ENCODE measurements at regions of chr21 and their contacts with region 1.

Region 1: DNA sequence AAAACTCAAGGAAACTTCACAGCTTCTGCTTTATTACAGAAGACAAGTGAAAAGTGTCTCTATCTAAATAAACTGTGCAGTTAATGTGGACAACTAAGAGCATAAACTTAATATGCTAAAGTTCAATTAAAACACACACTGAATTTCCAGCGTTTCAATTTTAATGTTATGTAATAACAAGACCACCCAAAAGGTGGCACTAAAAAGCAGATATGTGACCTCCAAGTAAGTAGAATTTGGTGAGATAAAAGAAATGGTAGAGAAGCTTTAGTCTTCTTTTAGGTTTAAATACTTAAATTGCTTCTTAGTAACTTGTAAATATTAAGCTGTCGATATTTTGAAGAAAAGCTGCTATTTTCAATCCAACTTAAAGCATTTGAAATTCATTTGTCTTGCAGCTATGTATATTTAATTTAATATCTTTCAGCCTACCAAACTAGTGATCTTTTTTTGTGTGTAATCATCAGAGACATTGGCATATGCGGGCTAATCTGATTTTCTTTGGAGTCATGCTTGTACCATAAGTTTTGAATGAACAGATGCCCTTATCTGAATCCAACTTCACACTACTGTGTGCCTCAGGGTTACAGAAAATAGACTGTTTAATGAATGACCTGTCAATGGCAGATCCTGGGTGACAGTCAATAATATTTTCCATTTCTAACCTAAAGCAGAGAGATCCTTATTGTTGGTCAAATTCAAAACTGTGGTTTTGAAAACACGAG is 36.5 kb upstream of the ADAMTS1 start:
- DNase-seq: no peak
- H3K4me3 ChIP-seq: no peak overlapping the region
- H3K27ac ChIP-seq: no peak overlapping the region
- H3K4me1 ChIP-seq: peaks cover 28 to 43% of the 10 kb centered on the region in 2 donors
- H3K27me3 ChIP-seq: no peaks in the 10 kb centered on the region
- CTCF ChIP-seq: peak in 3 of 6 experiments; percentile 49 to 68 (median 61)
- POLR2A ChIP-seq: no peak

Region 2: DNA sequence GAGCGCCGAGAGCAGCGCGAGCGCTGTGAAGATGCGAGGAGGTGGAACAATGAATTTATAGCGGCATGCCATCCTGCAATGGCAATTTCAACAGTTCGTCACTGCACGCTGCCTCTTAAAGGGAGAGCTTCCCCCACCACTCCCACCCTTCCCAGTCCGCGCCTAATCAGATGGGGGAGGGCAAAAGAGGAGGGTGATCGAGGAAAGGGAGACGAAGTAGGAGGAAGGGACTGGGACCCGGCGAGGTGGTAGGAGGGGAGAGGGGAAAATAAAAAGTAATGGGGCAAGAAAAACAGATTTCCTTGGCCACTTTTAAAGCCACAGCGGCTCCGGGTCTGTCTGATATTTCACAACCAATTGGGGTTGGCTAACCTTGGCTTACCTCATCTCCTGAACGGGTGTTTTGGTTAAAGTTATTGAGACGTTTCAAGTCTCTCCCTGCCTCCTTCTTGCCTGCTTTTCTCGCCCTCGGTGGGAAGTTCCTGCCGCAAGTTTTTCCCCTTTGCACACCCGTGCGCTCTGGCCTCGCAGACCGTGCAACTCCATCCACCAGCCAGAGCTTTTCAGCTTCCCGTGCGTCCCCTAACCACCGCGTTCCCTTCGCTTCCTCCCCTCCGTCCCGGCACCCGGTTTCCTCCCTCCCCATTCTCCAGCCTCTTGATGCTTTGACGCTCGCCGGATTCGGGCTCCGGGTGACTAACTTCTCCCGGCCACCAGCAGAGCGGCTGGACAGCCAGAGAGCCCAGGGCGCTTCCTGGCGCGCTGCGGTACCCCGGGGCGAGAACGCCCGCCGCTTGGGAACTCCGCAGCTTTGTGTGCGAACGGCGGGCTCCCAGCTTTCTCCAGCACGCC is 85.6 kb after region 1 on chr21 and contains the start of gene ADAMTS5:
- intact Hi-C with region 1: loop called (anchors 10 kb)
- DNase-seq: peak; percentile 59 to 67
- H3K4me3 ChIP-seq: peak within 1 kb of the TSS; percentile 43 to 65 (median 56)
- H3K27ac ChIP-seq: peak within 1 kb of the TSS; percentile 81 to 89 (median 84)
- H3K4me1 ChIP-seq: peaks cover 15 to 19% of the 10 kb centered on the region in 2 donors
- H3K27me3 ChIP-seq: no peaks in the 10 kb centered on the region
- CTCF ChIP-seq: no peak
- POLR2A ChIP-seq: peak in 1 of 2 donors; percentile 57
- total RNA-seq, gene ADAMTS5: 13.5 to 29.3 (median 21.3) TPM

Region 3: DNA sequence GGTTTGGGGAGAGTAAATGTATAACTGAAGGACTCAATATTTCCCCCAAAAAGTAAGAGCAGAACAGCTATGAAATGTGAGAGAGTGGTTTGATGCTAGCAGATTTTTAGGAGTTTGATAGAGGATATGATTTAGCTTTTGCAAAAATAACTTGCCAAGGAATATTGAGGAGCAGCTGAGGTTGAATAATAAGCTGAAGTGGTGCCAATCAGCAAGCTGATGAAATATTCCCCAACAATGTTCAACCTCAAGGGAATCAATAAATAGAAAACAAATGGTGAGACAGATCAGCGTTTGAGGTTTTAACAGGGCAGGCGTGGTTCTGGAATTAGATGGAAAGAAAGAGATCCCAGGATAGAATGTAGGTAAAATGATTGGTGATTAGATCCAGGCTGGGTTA is 498.6 kb after region 1 on chr21:
- intact Hi-C with region 1: no loop called
- DNase-seq: no peak
- H3K4me3 ChIP-seq: no peak overlapping the region
- H3K27ac ChIP-seq: no peak overlapping the region
- H3K4me1 ChIP-seq: no peaks in the 10 kb centered on the region
- H3K27me3 ChIP-seq: no peaks in the 10 kb centered on the region
- CTCF ChIP-seq: no peak
- POLR2A ChIP-seq: no peak

Measured in thyroid gland (tissue), 4 donors.